AG04449 (cell line): ENCODE measurements at regions of chr2 and their contacts with region 1.

Region 1: GRCh38 chr2:177164584-177165052 is 48.0 kb upstream of the HNRNPA3 start:
- DNase-seq: no peak
- H3K4me3 ChIP-seq: peak overlapping the region; percentile 44
- CTCF ChIP-seq: peak; percentile 98

Region 2: GRCh38 chr2:176126929-176127773 is 1037.5 kb before region 1 on chr2:
- CTCF ChIA-PET with region 1: interaction called, 74 read pairs
- POLR2A ChIA-PET with region 1: no interaction called
- DNase-seq: no peak
- H3K4me3 ChIP-seq: peak overlapping the region; percentile 13
- CTCF ChIP-seq: peak; percentile 57

Region 3: DNA sequence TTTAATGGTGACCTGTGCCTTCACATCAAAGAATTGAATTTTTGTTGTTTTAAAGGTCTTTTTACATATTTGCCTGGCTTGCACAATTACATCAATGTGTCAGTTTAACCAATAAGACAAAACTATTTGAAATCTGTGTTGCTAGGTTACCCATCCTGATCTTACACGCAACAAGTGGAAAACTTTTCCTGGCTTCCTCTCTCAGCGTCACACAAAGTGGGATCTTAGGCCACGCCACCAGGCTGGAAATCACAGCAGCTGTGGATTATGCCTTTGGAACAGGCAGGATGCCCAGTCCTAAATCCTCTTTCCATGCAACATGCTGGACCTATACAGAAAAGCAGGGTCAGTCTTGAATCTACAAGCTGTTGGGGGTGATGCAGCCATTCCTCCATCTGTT is 250.2 kb before region 1 on chr2:
- CTCF ChIA-PET with region 1: no interaction called
- POLR2A ChIA-PET with region 1: no interaction called
- DNase-seq: no peak
- H3K4me3 ChIP-seq: no peak overlapping the region
- CTCF ChIP-seq: no peak

Region 4: GRCh38 chr2:177010861-177011260 is 153.8 kb before region 1 on chr2:
- CTCF ChIA-PET with region 1: no interaction called
- POLR2A ChIA-PET with region 1: no interaction called
- DNase-seq: no peak
- H3K4me3 ChIP-seq: no peak overlapping the region
- CTCF ChIP-seq: no peak

Region 5: DNA sequence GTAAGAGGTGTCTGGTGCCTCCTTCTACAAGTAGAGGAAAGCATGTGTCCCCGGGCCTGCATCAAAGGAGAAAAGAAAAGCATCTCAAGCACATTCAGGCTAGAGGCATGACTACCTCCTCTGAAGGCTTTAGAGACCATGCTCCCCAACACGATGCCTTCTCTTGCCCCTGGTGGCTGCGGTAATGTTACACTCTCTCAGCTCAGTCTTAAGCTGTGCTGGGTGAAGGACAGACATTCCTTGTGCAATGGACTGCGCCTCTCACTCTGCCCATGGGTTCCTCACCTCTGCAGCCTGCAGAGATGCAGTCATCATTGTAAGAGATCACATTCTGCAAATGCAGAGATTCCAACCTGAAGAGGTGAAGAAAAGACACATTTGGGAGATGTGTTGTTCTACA is 100.2 kb before region 1 on chr2:
- CTCF ChIA-PET with region 1: no interaction called
- POLR2A ChIA-PET with region 1: no interaction called
- DNase-seq: no peak
- H3K4me3 ChIP-seq: no peak overlapping the region
- CTCF ChIP-seq: no peak

Region 6: GRCh38 chr2:177263451-177264208 is 99.0 kb after region 1 on chr2:
- CTCF ChIA-PET with region 1: interaction called, 70 read pairs
- POLR2A ChIA-PET with region 1: interaction called, 19 read pairs
- DNase-seq: peak; percentile 89
- H3K4me3 ChIP-seq: peak overlapping the region; percentile 76
- CTCF ChIP-seq: peak; percentile 98

Region 7: GRCh38 chr2:177325270-177325929 is 160.8 kb after region 1 on chr2:
- CTCF ChIA-PET with region 1: interaction called, 37 read pairs
- POLR2A ChIA-PET with region 1: no interaction called
- DNase-seq: no peak
- H3K4me3 ChIP-seq: no peak overlapping the region
- CTCF ChIP-seq: no peak

Region 8: GRCh38 chr2:177413703-177414102 is 249.1 kb after region 1 on chr2:
- CTCF ChIA-PET with region 1: interaction called, 102 read pairs
- POLR2A ChIA-PET with region 1: no interaction called
- DNase-seq: no peak
- H3K4me3 ChIP-seq: no peak overlapping the region
- CTCF ChIP-seq: no peak

Region 9: GRCh38 chr2:177724398-177725287 is 560.0 kb after region 1 on chr2:
- CTCF ChIA-PET with region 1: interaction called, 29 read pairs
- POLR2A ChIA-PET with region 1: no interaction called
- DNase-seq: no peak
- H3K4me3 ChIP-seq: no peak overlapping the region
- CTCF ChIP-seq: peak; percentile 81